ENCODE measurements at regions of chr7 and their contacts with region 1.

Region 1: GRCh38 chr7:158829342-158830210 is at the start of gene ESYT2:
- DNase-seq: peak; percentile 91 to 98
- ATAC-seq: peak; percentile 85 to 89
- H3K4me3 ChIP-seq: peak within 1 kb of the TSS; percentile 92
- H3K27ac ChIP-seq: peak within 1 kb of the TSS; percentile 89 to 97
- H3K4me1 ChIP-seq: peaks cover 24% of the 10 kb centered on the region
- CTCF ChIP-seq: peak; percentile 10; the same call in 1 of the 3 replicates
- EP300 ChIP-seq: no peak
- POLR2A ChIP-seq: peak; percentile 91
- RAD21 ChIP-seq: peak in 1 of 2 experiments; percentile 45; a peak in 2 of 5 replicates
- polyA plus RNA-seq, gene ESYT2: 73.2 and 77.0 TPM in 2 replicates

Region 2: GRCh38 chr7:158818325-158819213 is 11.0 kb before region 1 on chr7:
- CTCF ChIA-PET with region 1: interaction called, 8 read pairs
- POLR2A ChIA-PET with region 1: interaction called, 22 read pairs
- DNase-seq: peak; percentile 89 to 98
- ATAC-seq: peak; percentile 90 to 92
- H3K4me3 ChIP-seq: peak overlapping the region; percentile 40
- H3K27ac ChIP-seq: peak overlapping the region; percentile 95 to 99
- H3K4me1 ChIP-seq: peaks cover 68% of the 10 kb centered on the region
- CTCF ChIP-seq: no peak
- EP300 ChIP-seq: peak in 1 of 2 experiments; percentile 26; a peak in 2 of 5 replicates
- POLR2A ChIP-seq: peak; percentile 26; the same call in 1 of the 2 replicates
- RAD21 ChIP-seq: peak; percentile 40 to 55

Region 3: DNA sequence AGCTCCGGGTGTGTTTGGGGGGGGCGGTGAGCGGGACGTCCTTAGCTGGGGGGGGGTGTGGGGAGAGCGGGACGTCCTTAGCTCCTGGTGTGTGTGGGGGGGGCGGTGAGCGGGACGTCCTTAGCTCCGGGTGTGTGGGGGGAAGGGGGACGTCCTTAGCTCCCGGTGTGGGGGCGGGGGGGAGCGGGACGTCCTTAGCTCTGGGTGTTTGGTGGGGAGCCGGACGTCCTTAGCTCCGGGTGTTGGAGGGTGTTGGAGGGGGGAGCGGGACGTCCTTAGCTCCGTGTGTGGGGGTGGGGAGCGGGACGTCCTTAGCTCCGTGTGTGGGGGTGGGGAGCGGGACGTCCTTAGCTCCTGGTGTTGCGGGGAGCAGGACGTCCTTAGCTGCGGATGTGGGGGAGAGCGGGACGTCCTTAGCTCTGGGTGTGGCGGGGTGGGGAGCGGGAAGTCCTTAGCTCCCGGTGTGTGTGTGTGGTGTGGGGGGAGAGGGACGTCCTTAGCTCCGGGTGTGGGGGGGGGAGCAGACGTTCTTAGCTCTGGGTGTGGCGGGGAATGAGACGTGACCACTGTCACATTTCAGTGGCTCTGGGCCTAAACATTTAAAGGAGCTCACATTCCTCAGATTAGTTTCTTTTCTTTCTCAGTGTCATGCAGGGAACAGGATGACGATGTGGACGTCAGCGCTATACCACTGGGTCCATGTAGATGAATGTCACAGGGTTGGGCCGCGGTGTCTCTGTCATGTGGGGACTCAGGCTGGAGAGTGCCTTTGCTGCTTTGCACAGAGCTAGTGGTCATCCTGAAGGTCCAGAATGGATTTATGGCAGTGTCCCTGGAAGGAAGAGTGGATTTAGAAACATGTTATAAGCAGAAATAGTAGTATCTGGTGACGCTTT is 34.3 kb after region 1 on chr7:
- CTCF ChIA-PET with region 1: interaction called, 4 read pairs
- POLR2A ChIA-PET with region 1: interaction called, 17 read pairs
- DNase-seq: peak; percentile 41 to 73
- ATAC-seq: peak; percentile 75 to 81
- H3K4me3 ChIP-seq: peak overlapping the region; percentile 47
- H3K27ac ChIP-seq: peak overlapping the region; percentile 76 to 93
- H3K4me1 ChIP-seq: peaks cover 20% of the 10 kb centered on the region
- CTCF ChIP-seq: no peak
- EP300 ChIP-seq: no peak
- POLR2A ChIP-seq: no peak; the same call in 1 of the 2 replicates
- RAD21 ChIP-seq: no peak

Region 4: DNA sequence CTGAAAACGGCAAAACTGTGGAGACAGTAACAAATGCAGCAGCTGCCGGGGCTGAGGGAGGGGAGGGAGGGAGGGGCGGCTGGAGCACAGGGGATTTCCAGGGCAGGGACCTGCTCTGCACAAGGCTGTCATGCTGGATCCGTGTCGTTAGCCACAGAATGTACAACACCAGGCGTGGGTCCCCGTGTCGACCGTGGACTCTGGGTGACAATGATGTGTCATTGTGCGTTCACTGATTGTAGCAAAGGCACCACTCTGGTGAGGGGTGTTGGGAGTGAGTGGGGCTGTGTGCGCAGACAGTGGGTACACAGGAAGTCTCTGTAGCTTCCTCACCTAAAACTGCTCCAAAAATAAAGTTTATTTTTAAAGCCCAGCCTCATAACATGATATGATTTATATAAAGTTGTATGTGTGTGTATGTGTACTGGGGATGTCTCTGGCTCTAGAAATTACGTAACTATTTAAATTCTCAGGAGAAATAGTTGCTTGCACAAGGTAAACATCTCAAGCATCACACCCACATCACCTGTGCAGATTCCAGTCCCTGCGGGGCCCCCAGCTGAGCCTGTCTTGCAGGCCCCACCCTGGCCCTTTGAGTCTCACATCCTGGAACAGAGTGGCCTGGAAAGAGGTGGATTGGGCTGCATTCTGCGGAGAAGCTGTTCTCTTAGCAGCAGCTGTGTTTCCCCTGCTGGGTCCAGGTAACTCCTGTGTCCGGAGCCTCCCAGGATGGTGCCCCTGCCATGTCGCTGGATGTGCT is 162.4 kb after region 1 on chr7:
- CTCF ChIA-PET with region 1: no interaction called
- POLR2A ChIA-PET with region 1: no interaction called
- DNase-seq: no peak
- ATAC-seq: no peak
- H3K4me3 ChIP-seq: no peak overlapping the region
- H3K27ac ChIP-seq: no peak overlapping the region
- H3K4me1 ChIP-seq: 0 out of 3 replicates have a peak, but pooled peaks cover 3% of the 10 kb centered on the region
- CTCF ChIP-seq: no peak
- EP300 ChIP-seq: no peak
- POLR2A ChIP-seq: no peak
- RAD21 ChIP-seq: no peak

Region 5: GRCh38 chr7:159042581-159043101 is 213.1 kb after region 1 on chr7:
- CTCF ChIA-PET with region 1: no interaction called
- POLR2A ChIA-PET with region 1: no interaction called
- DNase-seq: no peak
- ATAC-seq: no peak
- H3K4me3 ChIP-seq: no peak overlapping the region
- H3K27ac ChIP-seq: no peak overlapping the region
- H3K4me1 ChIP-seq: no peaks in the 10 kb centered on the region
- CTCF ChIP-seq: no peak
- EP300 ChIP-seq: no peak
- POLR2A ChIP-seq: no peak
- RAD21 ChIP-seq: no peak

Measured in A549 (cell line).